ENCODE measurements at regions of chr7 and their contacts with region 1.

Region 1: DNA sequence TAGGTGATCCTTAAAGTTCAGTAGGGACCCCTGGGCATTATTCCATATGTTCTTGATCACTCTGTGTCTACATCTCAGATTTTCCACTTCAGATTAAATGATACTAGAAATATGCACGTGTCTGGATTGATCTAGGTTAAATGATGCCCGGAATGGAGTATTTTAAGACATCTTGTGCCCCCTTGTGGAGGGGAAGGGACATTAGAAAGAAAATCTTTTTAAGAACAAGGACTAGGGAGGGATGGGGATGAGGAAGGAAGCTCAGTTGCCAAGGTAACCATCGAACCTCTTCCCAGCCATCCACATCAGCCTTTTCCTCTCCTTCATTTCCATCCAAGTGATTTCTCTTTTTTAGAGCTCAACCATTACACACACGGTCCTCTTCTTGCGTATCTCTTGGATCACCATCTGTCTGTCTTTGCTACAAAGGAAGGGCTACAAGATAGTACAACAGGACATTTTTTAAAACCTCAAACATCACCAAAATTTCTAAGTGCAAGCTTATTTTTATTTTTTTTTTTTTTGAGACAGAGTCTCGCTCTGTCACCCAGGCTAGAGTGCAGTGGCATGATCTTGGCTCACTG is 40.5 kb downstream of the PRSS2 start:
- DNase-seq: no peak
- H3K4me3 Mint-ChIP-seq: peak overlapping the region; percentile 76
- H3K27ac Mint-ChIP-seq: peak overlapping the region; percentile 92
- H3K4me1 Mint-ChIP-seq: peaks cover 68% of the 10 kb centered on the region
- H3K27me3 Mint-ChIP-seq: peaks cover 7% of the 10 kb centered on the region

Region 2: GRCh38 chr7:141737834-141738591 is 1073.2 kb before region 1 on chr7 and contains the start of gene SSBP1:
- intact Hi-C with region 1: loop called (anchors 5 kb)
- DNase-seq: peak; percentile 93
- H3K4me3 Mint-ChIP-seq: peak within 1 kb of the TSS; percentile 94
- H3K27ac Mint-ChIP-seq: peak within 1 kb of the TSS; percentile 93
- H3K4me1 Mint-ChIP-seq: peaks cover 23% of the 10 kb centered on the region
- H3K27me3 Mint-ChIP-seq: no peaks in the 10 kb centered on the region
- total RNA-seq, gene SSBP1: 244 and 245 TPM in 2 replicates

Region 3: DNA sequence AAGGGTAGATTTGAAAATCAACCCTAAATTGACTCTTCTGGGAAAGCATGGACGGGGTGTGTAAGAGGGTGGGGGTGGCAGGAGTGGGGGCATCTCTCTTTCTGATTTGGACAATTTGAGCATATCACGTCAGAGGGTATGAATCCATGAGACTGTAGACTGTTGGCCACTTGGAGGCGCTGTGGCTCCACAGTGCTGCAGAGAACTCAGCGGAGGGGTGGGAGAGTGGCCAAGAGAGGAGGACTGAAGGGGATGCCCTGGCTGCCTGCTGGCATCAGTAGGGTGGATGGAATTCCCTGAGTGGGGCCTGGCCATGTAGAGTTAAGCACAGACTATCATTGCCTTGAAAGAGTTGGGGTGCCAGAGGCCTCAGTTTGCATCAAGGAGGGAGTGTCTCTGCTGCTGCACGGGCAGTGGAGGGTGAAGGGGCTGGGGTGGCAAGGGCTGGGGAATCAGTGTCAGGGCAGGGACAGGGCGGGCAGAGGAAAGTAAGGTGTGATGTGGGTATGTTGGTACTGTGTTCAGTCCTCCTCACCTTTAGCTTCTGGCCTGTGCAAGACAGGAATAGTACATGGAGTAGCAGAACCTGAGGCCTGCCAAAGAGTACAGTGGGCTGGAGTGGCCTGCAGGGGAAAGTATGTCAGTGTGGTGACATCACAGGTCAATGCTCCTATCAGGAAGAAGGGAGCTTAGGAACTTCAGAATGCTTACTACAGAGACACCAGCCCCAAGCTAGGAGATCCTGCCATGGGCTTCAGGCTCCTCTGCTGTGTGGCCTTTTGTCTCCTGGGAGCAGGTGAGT is 419.9 kb before region 1 on chr7:
- intact Hi-C with region 1: loop called (anchors 1 kb)
- DNase-seq: no peak
- H3K4me3 Mint-ChIP-seq: peak overlapping the region; percentile 51
- H3K27ac Mint-ChIP-seq: no peak overlapping the region
- H3K4me1 Mint-ChIP-seq: no peaks in the 10 kb centered on the region
- H3K27me3 Mint-ChIP-seq: peaks cover 7% of the 10 kb centered on the region

Region 4: GRCh38 chr7:142603870-142604448 is 207.3 kb before region 1 on chr7:
- intact Hi-C with region 1: loop called (anchors 1 kb)
- DNase-seq: peak; percentile 22
- H3K4me3 Mint-ChIP-seq: no peak overlapping the region
- H3K27ac Mint-ChIP-seq: no peak overlapping the region
- H3K4me1 Mint-ChIP-seq: peaks cover 9% of the 10 kb centered on the region
- H3K27me3 Mint-ChIP-seq: peaks cover 26% of the 10 kb centered on the region

Region 5: GRCh38 chr7:142697270-142697669 is 114.0 kb before region 1 on chr7:
- intact Hi-C with region 1: no loop called
- DNase-seq: no peak
- H3K4me3 Mint-ChIP-seq: no peak overlapping the region
- H3K27ac Mint-ChIP-seq: no peak overlapping the region
- H3K4me1 Mint-ChIP-seq: peaks cover 24% of the 10 kb centered on the region
- H3K27me3 Mint-ChIP-seq: peaks cover 4% of the 10 kb centered on the region

Region 6: DNA sequence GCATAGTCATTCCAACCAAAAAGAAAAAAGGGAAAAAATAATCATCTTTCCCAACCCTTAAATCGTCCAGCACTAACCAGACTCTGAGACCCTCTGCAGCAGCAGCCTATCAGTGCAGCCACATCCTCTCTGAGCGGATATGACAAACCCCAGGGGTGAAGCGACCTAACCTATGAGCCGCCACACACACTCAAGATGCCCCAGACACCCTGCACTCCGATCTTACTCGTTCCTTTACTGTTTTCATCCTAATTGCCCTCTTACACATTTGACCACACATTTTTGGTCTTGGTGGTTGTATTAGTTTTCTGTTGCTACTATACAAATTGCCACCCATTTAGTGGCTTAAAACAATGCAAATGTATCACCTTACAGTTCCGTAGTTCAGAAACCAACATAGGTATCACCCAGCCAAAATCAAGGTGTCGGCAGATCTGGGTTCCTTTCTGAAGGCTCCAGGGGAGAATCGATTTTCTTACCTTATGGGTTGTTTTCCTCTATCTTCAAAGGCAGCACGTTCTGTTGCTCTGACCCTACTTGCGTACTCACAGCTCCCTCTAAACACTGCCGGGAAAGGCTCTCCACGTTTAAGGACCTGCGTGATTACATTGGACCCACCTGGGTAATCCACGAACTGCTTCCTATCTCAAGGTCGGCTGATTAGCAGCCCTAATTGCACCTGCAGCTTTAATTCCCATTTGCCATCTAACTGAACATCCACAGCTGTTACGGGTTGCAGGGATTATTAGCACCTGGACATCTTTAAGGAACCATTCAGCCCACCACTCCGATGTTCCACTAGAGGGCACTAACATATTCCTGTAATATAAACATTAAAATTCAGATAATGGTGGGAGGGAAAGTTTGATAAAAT is 99.3 kb before region 1 on chr7:
- intact Hi-C with region 1: loop called (anchors 2 kb)
- DNase-seq: no peak
- H3K4me3 Mint-ChIP-seq: peak overlapping the region; percentile 72
- H3K27ac Mint-ChIP-seq: peak overlapping the region; percentile 72
- H3K4me1 Mint-ChIP-seq: peaks cover 51% of the 10 kb centered on the region
- H3K27me3 Mint-ChIP-seq: no peaks in the 10 kb centered on the region

Region 7: DNA sequence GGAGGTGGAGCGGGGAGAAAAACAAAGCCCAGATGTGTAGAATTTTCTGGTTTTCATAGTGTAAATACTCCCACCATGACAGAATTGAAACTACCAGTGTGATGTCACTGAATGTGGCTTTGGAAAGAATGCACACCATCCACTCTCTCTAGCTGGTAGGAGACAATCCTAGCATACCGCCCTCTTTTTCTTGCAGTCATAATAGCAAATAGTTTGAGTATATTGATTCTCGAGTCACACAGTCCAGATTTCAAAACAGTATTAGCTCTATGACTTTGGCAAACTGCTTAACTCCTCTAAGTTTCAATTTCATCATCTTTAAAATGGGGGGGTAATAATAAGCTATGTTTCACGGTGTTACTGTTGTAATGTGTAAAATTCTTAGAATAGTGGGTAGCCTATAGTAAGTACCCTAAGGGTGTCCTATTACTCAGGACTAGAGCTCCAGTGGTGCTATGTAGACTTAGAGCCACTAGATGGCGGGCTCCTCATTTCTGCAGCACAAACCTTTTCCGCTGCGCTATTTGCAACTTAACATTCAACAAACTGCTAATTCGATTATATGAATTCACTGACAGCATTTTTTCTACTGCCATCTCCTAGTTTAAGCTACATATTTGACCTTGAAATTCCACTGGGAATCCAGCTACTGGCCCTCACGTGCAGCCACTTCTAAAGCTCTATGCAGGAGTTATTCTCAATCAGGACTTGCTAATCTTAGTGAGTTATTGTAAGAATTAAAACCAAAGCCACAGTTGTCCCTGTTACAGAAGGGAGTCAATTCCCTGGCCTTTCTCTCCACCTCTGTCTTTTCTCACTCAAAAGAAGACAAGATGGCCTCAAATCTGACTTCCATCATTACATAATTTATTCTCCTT is 429.3 kb after region 1 on chr7:
- intact Hi-C with region 1: loop called (anchors 5 kb)
- DNase-seq: peak; percentile 63
- H3K4me3 Mint-ChIP-seq: no peak overlapping the region
- H3K27ac Mint-ChIP-seq: peak overlapping the region; percentile 87
- H3K4me1 Mint-ChIP-seq: peaks cover 49% of the 10 kb centered on the region
- H3K27me3 Mint-ChIP-seq: peaks cover 11% of the 10 kb centered on the region